Activated naive CD4-positive, alpha-beta T cell treated with anti-CD3 and anti-CD28 coated beads for 36 hours (primary cell): ENCODE measurements at regions of chrX and their contacts with region 1.

Region 1: DNA sequence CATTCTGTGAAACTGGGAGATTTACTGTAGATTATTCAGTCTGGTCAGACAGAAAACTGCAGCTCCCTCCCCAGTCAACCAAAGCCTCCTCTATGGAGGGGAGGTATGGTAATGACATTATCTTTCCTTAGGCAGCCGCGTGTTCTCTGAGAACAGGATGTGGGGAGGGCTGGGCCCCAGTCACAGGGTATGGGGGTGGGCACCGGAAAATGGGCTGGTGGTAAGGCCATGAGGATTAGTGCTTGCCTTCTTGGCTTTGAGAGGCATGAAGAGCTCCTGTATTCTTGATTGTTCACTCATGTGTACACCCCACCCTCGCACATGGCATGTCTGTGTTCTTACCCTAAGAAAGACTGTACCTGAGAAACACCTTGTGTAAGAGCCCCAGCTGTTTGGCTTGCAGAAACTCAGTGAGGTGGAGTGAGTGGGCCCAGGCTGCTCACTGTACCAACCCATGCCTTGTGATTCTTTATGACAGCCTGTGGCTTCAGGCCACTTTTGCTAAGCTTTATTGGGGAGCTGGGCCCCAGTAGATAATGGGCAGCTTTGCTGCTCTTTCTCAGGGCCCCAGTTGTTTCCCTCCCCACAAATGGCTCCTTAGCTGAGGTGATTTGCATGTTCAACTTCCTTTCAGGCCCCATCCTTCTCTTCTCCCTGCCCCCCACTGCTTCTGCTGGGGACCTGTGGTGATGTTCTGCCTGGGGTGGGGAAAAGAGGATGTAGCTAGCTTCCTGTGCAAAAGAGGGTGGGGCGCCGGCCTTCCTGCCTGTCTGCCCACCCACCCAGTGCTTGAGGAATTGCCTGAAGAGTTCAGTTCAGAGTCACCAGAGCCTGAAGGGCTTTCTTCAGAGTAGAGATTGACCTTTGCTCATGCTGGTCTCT is 30.7 kb downstream of the MSN start:
- DNase-seq: peak; percentile 82
- H3K4me3 Mint-ChIP-seq: peak overlapping the region; percentile 50
- H3K27ac Mint-ChIP-seq: peak overlapping the region; percentile 95
- H3K4me1 Mint-ChIP-seq: peaks cover 86% of the 10 kb centered on the region
- H3K27me3 Mint-ChIP-seq: no peaks in the 10 kb centered on the region

Region 2: DNA sequence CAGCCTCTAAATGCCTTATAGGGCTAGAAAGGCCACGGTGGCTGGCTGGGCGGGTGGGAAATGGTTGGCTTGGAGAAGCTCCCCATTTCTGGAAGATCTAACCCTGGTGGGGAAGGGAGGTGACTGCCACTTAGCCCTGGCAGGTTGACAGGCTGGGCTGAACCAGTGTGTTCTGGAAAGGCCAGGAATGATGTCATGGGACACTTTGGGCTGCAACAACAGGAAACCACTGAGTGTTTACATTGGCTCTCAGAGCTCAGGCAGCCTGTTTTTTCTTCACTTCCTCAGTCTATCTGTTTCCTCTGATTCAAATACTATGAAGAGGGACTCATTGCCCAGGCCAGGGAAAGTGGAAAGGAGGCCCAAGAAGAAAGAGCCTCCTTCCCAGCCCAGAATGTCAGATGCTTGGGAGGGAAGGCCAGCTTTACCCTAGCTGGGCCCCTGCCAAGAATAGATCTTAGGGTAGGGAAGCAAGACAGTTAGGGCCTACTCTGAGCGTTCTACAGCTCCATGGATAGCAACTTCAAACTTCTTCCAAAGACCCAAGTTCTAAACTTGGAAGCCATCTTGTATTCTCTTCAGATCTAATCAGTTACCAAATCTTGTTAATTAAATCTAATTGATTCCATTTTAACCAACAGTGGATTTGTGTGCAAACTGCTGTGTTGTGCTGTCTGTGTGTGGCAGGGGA is 96.5 kb before region 1 on chrX:
- CTCF ChIA-PET with region 1: interaction called, 9 read pairs
- intact Hi-C with region 1: loop called (anchors 1 kb)
- DNase-seq: peak; percentile 66
- H3K4me3 Mint-ChIP-seq: peak overlapping the region; percentile 15
- H3K27ac Mint-ChIP-seq: peak overlapping the region; percentile 92
- H3K4me1 Mint-ChIP-seq: peaks cover 74% of the 10 kb centered on the region
- H3K27me3 Mint-ChIP-seq: no peaks in the 10 kb centered on the region

Region 3: DNA sequence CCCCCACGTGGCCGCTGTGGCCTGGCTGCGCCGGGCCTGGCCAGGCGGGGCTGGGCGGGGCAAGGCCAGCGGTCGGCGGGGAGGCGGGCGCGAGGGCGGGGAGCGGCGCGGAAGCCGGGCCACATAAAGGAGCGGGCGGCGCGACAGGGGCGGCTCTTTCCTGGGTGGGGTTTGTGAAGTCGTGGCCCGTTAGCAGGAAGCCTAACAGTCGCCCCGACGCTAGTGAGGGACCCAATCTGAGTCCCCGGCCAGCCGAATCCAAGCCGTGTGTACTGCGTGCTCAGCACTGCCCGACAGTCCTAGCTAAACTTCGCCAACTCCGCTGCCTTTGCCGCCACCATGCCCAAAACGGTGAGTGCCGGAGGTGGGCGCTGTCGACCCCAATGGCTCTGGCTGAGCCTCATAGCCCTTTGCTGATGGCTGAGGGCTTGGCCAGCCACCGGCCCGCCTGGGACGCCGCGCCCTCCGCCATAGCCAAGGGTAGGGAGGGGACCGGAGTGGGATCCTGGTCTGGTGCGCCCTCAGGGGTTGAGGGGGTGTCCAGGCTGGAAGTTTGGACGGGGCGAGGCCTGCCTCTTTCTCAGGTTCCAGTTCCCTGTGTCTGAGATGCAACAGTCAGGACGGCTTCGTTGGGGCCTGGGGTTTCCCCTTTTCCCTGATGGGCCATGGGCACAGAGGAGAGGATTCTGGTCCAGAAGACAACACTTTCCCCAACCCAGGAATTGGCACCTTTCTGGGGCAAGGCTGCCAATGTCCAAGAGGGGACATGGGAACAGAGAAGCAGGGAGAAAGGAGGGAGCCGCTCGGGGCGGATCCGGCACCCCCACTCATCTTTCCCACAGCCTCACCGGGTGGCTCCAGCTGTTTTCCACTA is 30.4 kb before region 1 on chrX and contains the start of gene MSN:
- CTCF ChIA-PET with region 1: interaction called, 8 read pairs
- intact Hi-C with region 1: loop called (anchors 1 kb)
- DNase-seq: peak; percentile 78
- H3K4me3 Mint-ChIP-seq: peak within 1 kb of the TSS; percentile 94
- H3K27ac Mint-ChIP-seq: peak within 1 kb of the TSS; percentile 94
- H3K4me1 Mint-ChIP-seq: peaks cover 23% of the 10 kb centered on the region
- H3K27me3 Mint-ChIP-seq: no peaks in the 10 kb centered on the region
- total RNA-seq, gene MSN: 482 to 507 TPM

Region 4: GRCh38 chrX:65679071-65679540 is 19.1 kb before region 1 on chrX:
- CTCF ChIA-PET with region 1: interaction called, 3 read pairs
- intact Hi-C with region 1: loop called (anchors 1 kb)
- DNase-seq: no peak
- H3K4me3 Mint-ChIP-seq: no peak overlapping the region
- H3K27ac Mint-ChIP-seq: peak overlapping the region; percentile 91
- H3K4me1 Mint-ChIP-seq: peaks cover 86% of the 10 kb centered on the region
- H3K27me3 Mint-ChIP-seq: no peaks in the 10 kb centered on the region

Region 5: GRCh38 chrX:65731684-65732289 is 33.6 kb after region 1 on chrX:
- CTCF ChIA-PET with region 1: interaction called, 3 read pairs
- intact Hi-C with region 1: loop called (anchors 5 kb)
- DNase-seq: no peak
- H3K4me3 Mint-ChIP-seq: no peak overlapping the region
- H3K27ac Mint-ChIP-seq: peak overlapping the region; percentile 76
- H3K4me1 Mint-ChIP-seq: peaks cover 61% of the 10 kb centered on the region
- H3K27me3 Mint-ChIP-seq: no peaks in the 10 kb centered on the region

Region 6: DNA sequence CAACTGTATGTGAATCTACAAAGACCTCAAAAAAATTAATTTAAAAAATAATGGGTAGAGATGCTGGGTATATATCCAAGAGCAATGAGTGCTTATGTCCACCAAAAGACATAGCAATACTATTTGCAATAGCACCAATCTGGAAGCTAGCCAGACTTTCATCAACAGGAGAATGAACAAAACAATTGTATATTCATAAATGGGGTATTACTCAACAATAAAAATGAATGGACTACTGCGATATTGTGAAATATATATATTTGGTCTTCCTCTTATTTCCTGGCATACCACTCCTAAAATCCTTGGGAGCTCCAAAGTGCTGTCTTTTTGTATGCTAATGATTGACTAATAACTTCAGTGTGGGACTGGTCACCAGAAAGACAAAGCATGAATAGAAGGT is 46.8 kb after region 1 on chrX:
- CTCF ChIA-PET with region 1: no interaction called
- intact Hi-C with region 1: no loop called
- DNase-seq: no peak
- H3K4me3 Mint-ChIP-seq: no peak overlapping the region
- H3K27ac Mint-ChIP-seq: no peak overlapping the region
- H3K4me1 Mint-ChIP-seq: peaks cover 54% of the 10 kb centered on the region
- H3K27me3 Mint-ChIP-seq: no peaks in the 10 kb centered on the region